ENCODE measurements at regions of chr5 and their contacts with region 1.

Region 1: GRCh38 chr5:72307968-72308852 is 11.8 kb downstream of the MRPS27 start:
- DNase-seq: peak; percentile 98
- H3K4me3 ChIP-seq: peak overlapping the region; percentile 68 to 90 (median 72)
- H3K27ac ChIP-seq: peak overlapping the region; percentile 89 to 97 (median 96)
- H3K4me1 ChIP-seq: peaks cover 0 to 47% (median 24%) of the 10 kb centered on the region in 6 donors
- H3K27me3 ChIP-seq: no peaks in the 10 kb centered on the region
- CTCF ChIP-seq: peak; percentile 74 to 97 (median 94)
- POLR2A ChIP-seq: peak; percentile 62 to 96 (median 63)

Region 2: GRCh38 chr5:71782771-71783770 is 525.1 kb before region 1 on chr5:
- intact Hi-C with region 1: loop called (anchors 10 kb)
- DNase-seq: peak; percentile 77
- H3K4me3 ChIP-seq: peak overlapping the region in 3 of 8 donors; percentile 4 to 48 (median 22)
- H3K27ac ChIP-seq: no peak overlapping the region
- H3K4me1 ChIP-seq: peaks cover 0 to 21% (median 14%) of the 10 kb centered on the region in 6 donors
- H3K27me3 ChIP-seq: no peaks in the 10 kb centered on the region
- CTCF ChIP-seq: peak in 10 of 11 experiments; percentile 12 to 70 (median 61)
- POLR2A ChIP-seq: no peak

Region 3: GRCh38 chr5:72138943-72139521 is 169.2 kb before region 1 on chr5:
- intact Hi-C with region 1: loop called (anchors 10 kb)
- DNase-seq: no peak
- H3K4me3 ChIP-seq: no peak overlapping the region
- H3K27ac ChIP-seq: peak overlapping the region in 1 of 8 donors; percentile 21
- H3K4me1 ChIP-seq: peaks cover 0 to 11% (median 0%) of the 10 kb centered on the region in 6 donors
- H3K27me3 ChIP-seq: peaks cover 0 to 3% (median 0%) of the 10 kb centered on the region in 7 donors
- CTCF ChIP-seq: no peak
- POLR2A ChIP-seq: no peak

Measured in spleen (tissue), 13 donors.